Heart left ventricle (tissue), 16 donors: ENCODE measurements at regions of chr1 and their contacts with region 1.

Region 1: GRCh38 chr1:64686828-64687724 is 57.8 kb upstream of the RAVER2 start:
- DNase-seq: no peak
- ATAC-seq: peak in 3 of 4 donors; percentile 64 to 79 (median 75)
- H3K4me3 ChIP-seq: no peak overlapping the region
- H3K27ac ChIP-seq: no peak overlapping the region
- H3K4me1 ChIP-seq: peaks cover 0 to 17% (median 8%) of the 10 kb centered on the region in 12 donors
- H3K27me3 ChIP-seq: no peaks in the 10 kb centered on the region
- CTCF ChIP-seq: peak; percentile 77 to 92 (median 86)
- POLR2A ChIP-seq: no peak

Region 2: DNA sequence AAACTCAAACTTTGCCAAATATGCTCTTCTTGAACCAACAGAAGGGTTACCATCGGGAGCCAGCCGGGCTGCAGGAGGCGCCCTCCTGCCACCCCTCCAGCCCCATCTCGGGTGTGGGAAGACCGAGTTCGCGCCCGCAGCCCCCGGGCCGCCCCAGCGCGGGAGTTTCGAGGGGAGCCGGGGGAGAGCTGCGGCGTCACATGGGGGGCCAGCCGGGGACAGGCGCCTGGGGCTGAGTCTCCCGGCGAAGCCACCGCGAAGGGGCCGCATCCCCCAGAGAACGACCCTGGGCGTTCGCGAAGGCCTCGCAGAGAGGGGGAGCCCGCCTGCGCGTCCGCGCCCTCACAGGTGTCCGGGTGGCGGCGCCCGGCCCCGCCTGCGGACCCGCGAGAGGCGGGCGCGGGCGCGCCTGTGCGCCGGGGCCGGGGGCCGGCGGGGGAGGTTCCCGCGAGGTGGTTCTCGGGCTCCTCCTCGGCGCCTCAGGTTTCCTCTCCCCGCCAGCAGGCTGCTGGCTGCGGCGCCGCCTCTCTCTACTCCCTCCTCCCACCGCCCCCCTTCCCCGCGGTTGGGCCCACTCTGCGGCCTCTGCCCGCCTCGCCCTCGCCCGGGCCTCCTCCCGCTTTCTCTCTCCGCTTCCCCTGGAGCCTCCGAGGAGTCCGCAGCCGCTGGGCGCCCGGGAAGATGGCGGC is 57.6 kb after region 1 on chr1 and contains the start of gene RAVER2:
- intact Hi-C with region 1: loop called in 5 of 10 experiments (anchors 1 to 10 kb)
- DNase-seq: peak; percentile 78 to 88 (median 83)
- ATAC-seq: peak; percentile 75 to 91 (median 88)
- H3K4me3 ChIP-seq: peak within 1 kb of the TSS; percentile 66 to 96 (median 86)
- H3K27ac ChIP-seq: peak within 1 kb of the TSS; percentile 62 to 88 (median 84)
- H3K4me1 ChIP-seq: peaks cover 0 to 41% (median 18%) of the 10 kb centered on the region in 12 donors
- H3K27me3 ChIP-seq: no peaks in the 10 kb centered on the region
- CTCF ChIP-seq: peak in 11 of 12 donors; percentile 14 to 71 (median 53)
- POLR2A ChIP-seq: peak in 1 of 2 donors; percentile 20
- total RNA-seq, gene RAVER2: 16.5 to 25.8 (median 20.4) TPM

Region 3: GRCh38 chr1:65090403-65090802 is 403.3 kb after region 1 on chr1:
- intact Hi-C with region 1: no loop called
- DNase-seq: no peak
- ATAC-seq: no peak
- H3K4me3 ChIP-seq: no peak overlapping the region
- H3K27ac ChIP-seq: no peak overlapping the region
- H3K4me1 ChIP-seq: no peaks in the 10 kb centered on the region
- H3K27me3 ChIP-seq: no peaks in the 10 kb centered on the region
- CTCF ChIP-seq: no peak
- POLR2A ChIP-seq: no peak

Region 4: GRCh38 chr1:65419681-65420589 is 732.9 kb after region 1 on chr1:
- intact Hi-C with region 1: no loop called
- DNase-seq: peak; percentile 98 to 99 (median 99)
- ATAC-seq: peak; percentile 97 to 99 (median 98)
- H3K4me3 ChIP-seq: peak overlapping the region; percentile 36 to 98 (median 80)
- H3K27ac ChIP-seq: peak overlapping the region; percentile 92 to 99 (median 97)
- H3K4me1 ChIP-seq: peaks cover 0 to 45% (median 27%) of the 10 kb centered on the region in 12 donors
- H3K27me3 ChIP-seq: no peaks in the 10 kb centered on the region
- CTCF ChIP-seq: no peak
- POLR2A ChIP-seq: peak in 1 of 2 donors; percentile 38